ENCODE measurements at regions of chr9 and their contacts with region 1.

Region 1: DNA sequence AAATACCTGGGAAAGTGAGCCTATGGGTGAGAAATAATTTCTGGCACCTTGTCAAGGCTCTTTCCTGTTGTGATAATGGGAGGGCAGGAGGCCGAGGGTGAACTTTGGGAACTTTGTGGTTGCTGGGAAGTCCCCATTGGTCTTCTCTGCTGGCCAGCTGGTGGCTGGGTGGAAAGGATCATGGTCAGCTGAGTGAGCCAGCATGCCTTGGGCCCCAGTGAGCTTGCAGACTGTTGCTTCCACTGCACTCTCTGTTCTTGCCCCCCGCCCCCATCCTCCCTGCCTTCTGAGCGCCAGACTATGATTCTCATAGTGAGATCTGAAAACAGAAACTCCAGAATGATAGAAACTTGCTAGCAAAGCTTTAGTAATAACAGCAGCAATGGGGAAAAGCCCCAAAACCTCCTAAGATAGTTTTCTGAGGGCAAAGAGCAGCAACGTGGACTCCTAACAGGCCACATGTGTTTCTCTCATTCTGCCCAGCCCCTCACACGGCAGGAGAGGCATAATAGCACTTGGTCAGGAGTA is 139.2 kb upstream of the SMARCA2 start:
- DNase-seq: peak; percentile 88
- H3K4me3 Mint-ChIP-seq: peak overlapping the region; percentile 34
- H3K27ac Mint-ChIP-seq: peak overlapping the region; percentile 48
- H3K4me1 Mint-ChIP-seq: peaks cover 46% of the 10 kb centered on the region
- H3K27me3 Mint-ChIP-seq: peaks cover 25% of the 10 kb centered on the region

Region 2: GRCh38 chr9:893843-894420 is 982.1 kb before region 1 on chr9:
- CTCF ChIA-PET with region 1: no interaction called
- POLR2A ChIA-PET with region 1: no interaction called
- intact Hi-C with region 1: loop called (anchors 5 kb)
- DNase-seq: peak; percentile 80
- H3K4me3 Mint-ChIP-seq: no peak overlapping the region
- H3K27ac Mint-ChIP-seq: no peak overlapping the region
- H3K4me1 Mint-ChIP-seq: peaks cover 10% of the 10 kb centered on the region
- H3K27me3 Mint-ChIP-seq: peaks cover 5% of the 10 kb centered on the region

Region 3: DNA sequence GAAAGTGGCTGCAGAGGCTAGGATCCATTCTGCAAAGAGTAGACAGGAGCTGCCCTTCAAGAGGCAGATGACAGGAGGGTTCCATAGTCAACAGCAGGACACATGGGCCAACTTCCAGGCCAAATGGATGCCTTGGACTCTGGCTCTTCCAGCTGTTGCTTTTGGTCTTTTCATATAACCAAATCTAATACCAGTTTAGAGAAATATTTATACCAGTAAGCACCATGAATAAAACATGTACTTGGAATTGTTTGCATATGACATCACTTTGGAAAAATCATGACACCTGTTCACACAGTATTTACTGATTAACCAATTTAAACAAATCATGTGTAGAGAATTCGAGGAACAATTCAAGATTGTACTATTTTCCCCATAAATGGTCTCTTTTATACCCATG is 344.6 kb before region 1 on chr9:
- CTCF ChIA-PET with region 1: no interaction called
- POLR2A ChIA-PET with region 1: no interaction called
- intact Hi-C with region 1: no loop called
- DNase-seq: no peak
- H3K4me3 Mint-ChIP-seq: no peak overlapping the region
- H3K27ac Mint-ChIP-seq: no peak overlapping the region
- H3K4me1 Mint-ChIP-seq: peaks cover 8% of the 10 kb centered on the region
- H3K27me3 Mint-ChIP-seq: peaks cover 1% of the 10 kb centered on the region

Region 4: DNA sequence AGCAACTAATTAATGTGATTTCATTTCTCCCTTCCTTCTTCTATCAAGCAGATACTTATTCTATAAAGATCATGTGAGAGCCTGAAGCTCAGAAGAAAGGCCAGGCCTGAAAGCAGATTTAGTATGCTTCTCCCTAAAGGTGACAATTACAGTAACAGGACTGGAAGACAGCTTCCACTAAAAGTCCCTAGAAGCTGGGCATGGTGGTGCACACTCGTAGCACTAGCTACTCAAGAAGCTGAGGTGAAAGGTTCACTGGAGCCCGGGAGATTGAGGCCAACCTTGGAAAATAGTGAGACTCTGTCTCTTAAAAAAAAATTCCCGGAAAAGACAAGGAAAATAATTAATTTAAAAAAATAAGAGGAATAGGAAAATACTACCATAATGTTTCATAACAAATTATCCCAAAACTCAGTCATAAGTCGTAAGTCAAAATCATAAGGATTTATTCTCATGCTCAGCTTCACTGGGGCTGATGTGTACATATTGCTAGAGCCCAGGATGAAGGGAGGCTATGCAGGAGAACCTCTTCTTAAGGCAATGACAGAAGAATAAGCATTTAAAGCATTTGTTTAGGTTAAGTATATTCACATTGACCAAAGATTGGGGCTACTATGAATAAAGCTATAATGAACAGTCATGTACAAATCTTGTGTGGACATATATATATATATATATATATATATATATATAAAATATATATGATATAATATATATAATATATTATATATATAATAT is 71.7 kb before region 1 on chr9:
- CTCF ChIA-PET with region 1: no interaction called
- POLR2A ChIA-PET with region 1: no interaction called
- intact Hi-C with region 1: loop called (anchors 2 kb)
- DNase-seq: no peak
- H3K4me3 Mint-ChIP-seq: no peak overlapping the region
- H3K27ac Mint-ChIP-seq: peak overlapping the region; percentile 31
- H3K4me1 Mint-ChIP-seq: peaks cover 7% of the 10 kb centered on the region
- H3K27me3 Mint-ChIP-seq: peaks cover 2% of the 10 kb centered on the region

Region 5: GRCh38 chr9:2014696-2015580 is 139.0 kb after region 1 on chr9 and contains the start of gene SMARCA2:
- CTCF ChIA-PET with region 1: no interaction called
- POLR2A ChIA-PET with region 1: interaction called, 3 read pairs
- intact Hi-C with region 1: loop called (anchors 1 kb)
- DNase-seq: peak; percentile 98
- H3K4me3 Mint-ChIP-seq: peak within 1 kb of the TSS; percentile 99
- H3K27ac Mint-ChIP-seq: peak within 1 kb of the TSS; percentile 100
- H3K4me1 Mint-ChIP-seq: peaks cover 47% of the 10 kb centered on the region
- H3K27me3 Mint-ChIP-seq: peaks cover 4% of the 10 kb centered on the region
- total RNA-seq, gene SMARCA2: 95.1 to 100 TPM

Region 6: GRCh38 chr9:2087500-2088313 is 211.7 kb after region 1 on chr9:
- CTCF ChIA-PET with region 1: interaction called, 3 read pairs
- POLR2A ChIA-PET with region 1: no interaction called
- intact Hi-C with region 1: loop called (anchors 1 kb)
- DNase-seq: peak; percentile 37
- H3K4me3 Mint-ChIP-seq: no peak overlapping the region
- H3K27ac Mint-ChIP-seq: peak overlapping the region; percentile 74
- H3K4me1 Mint-ChIP-seq: peaks cover 28% of the 10 kb centered on the region
- H3K27me3 Mint-ChIP-seq: no peaks in the 10 kb centered on the region

Region 7: GRCh38 chr9:2697492-2697891 is 821.5 kb after region 1 on chr9:
- CTCF ChIA-PET with region 1: no interaction called
- POLR2A ChIA-PET with region 1: no interaction called
- intact Hi-C with region 1: no loop called
- DNase-seq: no peak
- H3K4me3 Mint-ChIP-seq: no peak overlapping the region
- H3K27ac Mint-ChIP-seq: no peak overlapping the region
- H3K4me1 Mint-ChIP-seq: no peaks in the 10 kb centered on the region
- H3K27me3 Mint-ChIP-seq: no peaks in the 10 kb centered on the region

Region 8: GRCh38 chr9:2837915-2838314 is 961.9 kb after region 1 on chr9:
- CTCF ChIA-PET with region 1: no interaction called
- POLR2A ChIA-PET with region 1: no interaction called
- intact Hi-C with region 1: loop called (anchors 5 kb)
- DNase-seq: no peak
- H3K4me3 Mint-ChIP-seq: no peak overlapping the region
- H3K27ac Mint-ChIP-seq: no peak overlapping the region
- H3K4me1 Mint-ChIP-seq: peaks cover 34% of the 10 kb centered on the region
- H3K27me3 Mint-ChIP-seq: no peaks in the 10 kb centered on the region

Measured in activated CD4-positive, alpha-beta memory T cell treated with anti-CD3 and anti-CD28 coated beads for 36 hours (primary cell).